OCI-LY7 (cell line): ENCODE measurements at regions of chr1 and their contacts with region 1.

Region 1: GRCh38 chr1:19815801-19816736 is 986 bp upstream of the RNF186 start:
- DNase-seq: peak; percentile 94
- H3K4me3 ChIP-seq: no peak overlapping the region
- H3K27ac ChIP-seq: peak overlapping the region; percentile 56
- H3K4me1 ChIP-seq: peaks cover 24% of the 10 kb centered on the region
- CTCF ChIP-seq: no peak

Region 2: GRCh38 chr1:19750101-19750881 is 65.8 kb before region 1 on chr1:
- CTCF ChIA-PET with region 1: no interaction called
- POLR2A ChIA-PET with region 1: no interaction called
- intact Hi-C with region 1: no loop called
- DNase-seq: no peak
- H3K4me3 ChIP-seq: no peak overlapping the region
- H3K27ac ChIP-seq: no peak overlapping the region
- H3K4me1 ChIP-seq: no peaks in the 10 kb centered on the region
- CTCF ChIP-seq: no peak

Region 3: GRCh38 chr1:19799877-19800804 is 15.9 kb before region 1 on chr1 and contains the start of gene TMCO4:
- CTCF ChIA-PET with region 1: no interaction called
- POLR2A ChIA-PET with region 1: interaction called, 5 read pairs
- intact Hi-C with region 1: loop called (anchors 2 kb)
- DNase-seq: peak; percentile 37
- H3K4me3 ChIP-seq: peak within 1 kb of the TSS; percentile 46
- H3K27ac ChIP-seq: no peak within 1 kb of the TSS
- H3K4me1 ChIP-seq: peaks cover 12% of the 10 kb centered on the region
- CTCF ChIP-seq: no peak
- total RNA-seq, gene TMCO4: 0.31 and 1.2 TPM in 2 replicates